MCF 10A (cell line): ENCODE measurements at regions of chr10 and their contacts with region 1.

Region 1: GRCh38 chr10:102480396-102480795 is 22.1 kb downstream of the ACTR1A start:
- DNase-seq: no peak
- H3K4me3 Mint-ChIP-seq: no peak overlapping the region
- H3K27ac Mint-ChIP-seq: no peak overlapping the region
- H3K4me1 Mint-ChIP-seq: no peaks in the 10 kb centered on the region
- H3K27me3 Mint-ChIP-seq: no peaks in the 10 kb centered on the region
- CTCF ChIP-seq: no peak

Region 2: DNA sequence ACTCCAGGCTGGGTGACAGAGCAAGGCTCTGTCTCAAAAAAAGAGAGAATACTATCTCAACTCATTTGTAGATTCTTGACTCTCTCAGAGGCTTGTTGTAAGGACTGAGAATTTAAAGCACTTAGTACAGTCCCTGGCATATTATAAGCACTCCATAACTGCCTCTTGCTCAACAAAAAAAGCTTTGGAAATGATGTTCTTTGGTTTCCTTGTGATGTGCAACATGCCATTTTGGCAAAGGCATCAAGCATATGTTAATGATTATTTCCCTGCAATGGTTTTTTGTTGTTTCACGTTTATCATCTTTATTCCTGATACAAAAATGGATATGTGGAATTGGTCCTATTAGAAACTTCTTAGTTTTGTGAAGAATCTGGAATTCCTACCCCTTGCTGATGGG is 312.5 kb before region 1 on chr10:
- CTCF ChIA-PET with region 1: interaction called, 3 read pairs
- POLR2A ChIA-PET with region 1: interaction called, 3 read pairs
- intact Hi-C with region 1: loop called (anchors 1 kb)
- DNase-seq: no peak
- H3K4me3 Mint-ChIP-seq: no peak overlapping the region
- H3K27ac Mint-ChIP-seq: no peak overlapping the region
- H3K4me1 Mint-ChIP-seq: peaks cover 5% of the 10 kb centered on the region
- H3K27me3 Mint-ChIP-seq: peaks cover 11% of the 10 kb centered on the region
- CTCF ChIP-seq: no peak

Region 3: DNA sequence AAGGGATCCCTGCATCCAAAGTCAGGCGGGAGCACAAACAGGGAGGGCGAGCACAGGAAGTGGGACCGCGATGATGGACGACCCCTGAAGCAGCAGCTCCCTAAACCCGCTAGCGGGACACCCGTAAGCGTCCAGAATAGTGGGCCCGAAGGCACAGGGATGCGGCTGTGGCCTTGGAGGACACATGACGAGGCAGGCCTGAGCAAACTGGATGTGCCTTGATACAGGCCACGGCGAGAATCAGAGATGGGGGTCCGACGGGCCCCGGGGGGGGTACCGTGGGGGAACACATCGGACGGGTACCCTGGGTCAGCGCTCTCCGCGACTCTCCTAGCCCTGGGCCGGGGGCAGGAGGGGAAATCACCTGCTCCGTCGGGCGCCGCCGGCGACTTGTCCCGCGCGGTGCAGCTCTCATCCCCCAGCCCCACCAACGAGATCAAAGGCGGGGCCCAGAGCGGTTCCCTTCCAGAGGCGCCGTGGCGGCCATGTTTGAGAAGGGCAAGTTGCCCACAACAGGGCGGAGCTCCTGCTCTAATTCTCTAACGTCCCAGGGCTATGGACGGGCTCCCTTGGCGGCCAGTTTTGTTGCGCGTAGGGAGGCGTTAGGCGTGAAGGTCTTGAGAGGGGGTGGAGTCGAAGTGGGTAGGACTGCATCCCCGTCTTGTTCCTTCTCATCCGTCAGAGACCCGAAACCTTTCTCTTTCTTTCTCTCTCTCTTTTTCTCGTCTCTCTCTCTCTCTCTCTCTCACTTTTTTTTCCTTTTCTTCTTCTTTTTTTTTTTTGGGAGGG is 48.0 kb before region 1 on chr10 and contains the start of gene CUEDC2:
- CTCF ChIA-PET with region 1: interaction called, 10 read pairs
- POLR2A ChIA-PET with region 1: interaction called, 4 read pairs
- intact Hi-C with region 1: no loop called
- DNase-seq: peak; percentile 97
- H3K4me3 Mint-ChIP-seq: peak within 1 kb of the TSS; percentile 90
- H3K27ac Mint-ChIP-seq: peak within 1 kb of the TSS; percentile 94
- H3K4me1 Mint-ChIP-seq: peaks cover 26% of the 10 kb centered on the region
- H3K27me3 Mint-ChIP-seq: no peaks in the 10 kb centered on the region
- CTCF ChIP-seq: no peak
- total RNA-seq, gene CUEDC2: 55.0 and 64.5 TPM in 2 replicates

Region 4: GRCh38 chr10:102461187-102462054 is 19.0 kb before region 1 on chr10:
- CTCF ChIA-PET with region 1: interaction called, 13 read pairs
- POLR2A ChIA-PET with region 1: interaction called, 5 read pairs
- intact Hi-C with region 1: no loop called
- DNase-seq: peak; percentile 95
- H3K4me3 Mint-ChIP-seq: peak overlapping the region; percentile 92
- H3K27ac Mint-ChIP-seq: peak overlapping the region; percentile 63
- H3K4me1 Mint-ChIP-seq: peaks cover 15% of the 10 kb centered on the region
- H3K27me3 Mint-ChIP-seq: no peaks in the 10 kb centered on the region
- CTCF ChIP-seq: no peak

Region 5: DNA sequence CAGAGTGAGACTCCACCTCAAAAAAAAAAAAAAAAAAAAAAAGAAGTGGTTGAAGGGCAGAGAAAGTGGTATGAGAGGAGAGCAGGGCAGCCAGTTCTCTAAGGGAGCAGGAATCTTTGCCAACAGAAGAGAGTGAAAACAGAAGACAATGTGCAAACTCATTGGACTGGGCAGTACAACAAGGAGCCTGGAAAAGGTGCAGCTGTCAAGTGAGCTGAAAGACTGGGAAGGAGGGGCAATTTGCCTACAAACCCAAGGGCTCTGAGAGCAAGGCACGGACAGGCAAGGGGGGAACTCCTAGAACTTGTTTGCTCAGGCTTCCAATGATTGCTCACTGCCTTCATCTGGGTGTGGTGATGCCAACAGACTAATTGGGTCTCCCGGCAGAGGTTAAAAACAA is 12.6 kb after region 1 on chr10:
- CTCF ChIA-PET with region 1: interaction called, 15 read pairs
- POLR2A ChIA-PET with region 1: no interaction called
- intact Hi-C with region 1: no loop called
- DNase-seq: no peak
- H3K4me3 Mint-ChIP-seq: no peak overlapping the region
- H3K27ac Mint-ChIP-seq: no peak overlapping the region
- H3K4me1 Mint-ChIP-seq: peaks cover 13% of the 10 kb centered on the region
- H3K27me3 Mint-ChIP-seq: no peaks in the 10 kb centered on the region
- CTCF ChIP-seq: no peak